IMR-90 (cell line): ENCODE measurements at regions of chr16 and their contacts with region 1.

Region 1: DNA sequence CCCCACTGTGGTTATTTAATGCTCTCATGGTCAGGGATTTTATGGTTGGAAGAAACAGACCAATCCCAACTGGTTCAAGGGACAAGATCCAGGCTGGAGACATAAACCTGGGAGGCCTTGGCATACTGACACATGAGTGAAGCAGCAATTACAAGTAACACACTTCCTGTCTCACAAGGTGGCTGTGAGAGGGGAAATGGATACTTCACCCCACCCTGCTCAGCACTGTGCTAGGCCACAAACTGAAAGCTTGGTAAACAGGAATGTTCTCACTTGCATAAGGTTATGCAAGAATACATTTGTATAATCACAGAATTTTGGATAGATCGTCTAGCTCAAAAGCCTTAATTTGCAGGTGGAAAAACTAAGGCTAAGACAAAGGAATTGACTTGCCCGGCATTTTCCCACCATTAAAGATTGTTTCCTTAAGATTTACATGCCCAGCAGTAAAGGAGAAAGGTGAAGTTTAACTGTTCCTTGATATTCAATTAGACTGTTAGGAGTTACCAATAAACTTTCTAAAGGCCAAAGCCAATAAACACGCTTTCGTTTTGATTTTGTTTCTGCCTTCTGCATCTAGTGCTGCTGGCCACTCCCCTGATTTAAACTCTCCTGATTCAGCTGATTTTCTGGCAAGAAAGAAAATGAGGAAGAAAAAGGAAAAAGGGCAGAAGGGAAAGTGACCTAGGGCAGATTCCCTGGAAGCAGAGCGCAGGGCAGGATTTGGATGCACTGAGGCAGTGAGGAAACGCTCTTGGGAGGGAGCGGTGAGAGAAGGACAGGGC is 215.6 kb upstream of the CDH5 start:
- DNase-seq: peak; percentile 28
- ATAC-seq: no peak
- H3K4me3 ChIP-seq: no peak overlapping the region
- H3K27ac ChIP-seq: peak overlapping the region; percentile 98; the same call in 1 of the 2 replicates
- H3K4me1 ChIP-seq: peaks cover 31% of the 10 kb centered on the region
- H3K27me3 ChIP-seq: no peaks in the 10 kb centered on the region
- CTCF ChIP-seq: no peak
- POLR2A ChIP-seq: no peak
- RAD21 ChIP-seq: no peak

Region 2: GRCh38 chr16:65754820-65755691 is 395.8 kb before region 1 on chr16:
- CTCF ChIA-PET with region 1: no interaction called
- POLR2A ChIA-PET with region 1: no interaction called
- dilution Hi-C with region 1: no loop called
- in situ Hi-C with region 1: no loop called
- intact Hi-C with region 1: loop called (anchors 10 kb)
- DNase-seq: peak; percentile 75
- ATAC-seq: peak; percentile 89
- H3K4me3 ChIP-seq: no peak overlapping the region
- H3K27ac ChIP-seq: peak overlapping the region; percentile 42; the same call in 1 of the 2 replicates
- H3K4me1 ChIP-seq: peaks cover 13% of the 10 kb centered on the region; the same call in 1 of the 2 replicates
- H3K27me3 ChIP-seq: peaks cover 20% of the 10 kb centered on the region
- CTCF ChIP-seq: no peak
- POLR2A ChIP-seq: no peak
- RAD21 ChIP-seq: no peak

Region 3: DNA sequence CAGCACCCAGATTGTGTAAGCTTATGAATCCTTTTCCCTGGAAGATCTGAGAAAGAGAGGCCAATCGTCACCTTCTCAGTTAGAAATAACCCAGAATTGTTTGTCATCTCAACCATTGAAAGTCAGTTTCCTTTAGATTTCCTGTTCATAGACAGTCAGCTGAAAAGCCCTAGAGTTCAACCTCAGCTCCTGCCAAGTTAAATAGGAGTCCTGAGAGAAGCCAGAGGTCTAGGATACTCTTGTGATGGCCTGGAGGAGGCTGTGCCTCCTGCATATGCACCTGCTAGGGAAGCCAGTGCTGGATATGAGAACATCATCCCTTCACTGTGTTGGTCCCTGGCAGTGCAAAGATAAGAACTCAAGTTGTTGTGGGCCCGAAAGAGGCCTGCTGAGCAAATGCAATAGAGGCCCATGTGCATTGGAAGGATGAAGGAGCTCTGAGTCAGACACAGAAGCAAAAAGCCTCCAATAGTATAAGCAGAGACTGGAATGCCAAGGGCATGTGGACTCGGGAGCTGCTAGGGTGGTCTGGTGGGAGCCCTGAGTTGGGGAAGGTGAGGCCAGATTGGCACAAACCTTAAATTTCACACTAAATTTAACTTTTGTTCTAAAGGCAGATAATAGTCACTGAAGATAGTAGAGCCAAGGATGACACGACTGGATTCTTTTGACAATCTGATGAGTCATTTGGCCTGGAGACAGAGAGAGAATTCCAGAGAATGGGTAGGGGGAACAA is 305.3 kb before region 1 on chr16:
- CTCF ChIA-PET with region 1: no interaction called
- POLR2A ChIA-PET with region 1: no interaction called
- dilution Hi-C with region 1: no loop called
- in situ Hi-C with region 1: no loop called
- intact Hi-C with region 1: loop called (anchors 10 kb)
- DNase-seq: peak; percentile 1
- ATAC-seq: peak; percentile 27
- H3K4me3 ChIP-seq: no peak overlapping the region
- H3K27ac ChIP-seq: no peak overlapping the region
- H3K4me1 ChIP-seq: no peaks in the 10 kb centered on the region
- H3K27me3 ChIP-seq: no peaks in the 10 kb centered on the region
- CTCF ChIP-seq: no peak
- POLR2A ChIP-seq: no peak
- RAD21 ChIP-seq: no peak

Region 4: GRCh38 chr16:66026211-66026610 is 124.7 kb before region 1 on chr16:
- CTCF ChIA-PET with region 1: no interaction called
- POLR2A ChIA-PET with region 1: no interaction called
- dilution Hi-C with region 1: no loop called
- in situ Hi-C with region 1: no loop called
- intact Hi-C with region 1: loop called (anchors 5 kb)
- DNase-seq: no peak
- ATAC-seq: no peak
- H3K4me3 ChIP-seq: no peak overlapping the region
- H3K27ac ChIP-seq: no peak overlapping the region
- H3K4me1 ChIP-seq: peaks cover 9% of the 10 kb centered on the region; the same call in 1 of the 2 replicates
- H3K27me3 ChIP-seq: no peaks in the 10 kb centered on the region
- CTCF ChIP-seq: peak; percentile 39
- POLR2A ChIP-seq: no peak
- RAD21 ChIP-seq: peak; percentile 53

Region 5: DNA sequence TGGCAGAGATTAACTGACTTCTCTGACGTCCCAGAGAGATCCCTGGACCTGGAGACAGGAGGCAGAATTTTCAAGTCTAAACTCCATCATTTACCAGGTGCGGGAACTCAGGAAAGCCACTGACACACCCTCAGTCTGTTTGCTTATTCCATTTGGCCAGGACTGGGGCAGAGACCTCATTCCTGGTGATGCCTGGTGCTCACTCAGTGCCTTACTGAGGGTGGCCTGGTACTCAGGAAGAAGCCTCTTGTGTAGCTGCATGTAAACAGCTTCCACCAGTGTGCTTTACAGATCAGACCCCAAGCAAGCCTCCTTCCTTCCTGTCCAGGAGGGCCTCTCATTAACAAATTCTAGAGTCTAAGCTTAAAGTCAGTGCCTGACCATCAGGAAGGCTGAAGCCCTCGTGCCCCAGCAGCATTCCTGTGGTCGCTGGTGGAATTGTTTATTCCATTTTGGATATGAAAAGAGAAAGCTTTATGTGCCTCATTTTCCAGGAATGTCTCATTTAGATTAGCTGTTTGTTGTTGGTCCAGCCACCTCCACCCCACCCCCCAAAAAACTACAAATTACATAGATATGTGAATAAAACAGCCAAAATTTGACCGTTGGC is 20.5 kb before region 1 on chr16:
- CTCF ChIA-PET with region 1: interaction called, 3 read pairs
- POLR2A ChIA-PET with region 1: interaction called, 5 read pairs
- dilution Hi-C with region 1: no loop called
- in situ Hi-C with region 1: no loop called
- intact Hi-C with region 1: loop called (anchors 2 kb)
- DNase-seq: peak; percentile 92
- ATAC-seq: peak; percentile 87
- H3K4me3 ChIP-seq: no peak overlapping the region
- H3K27ac ChIP-seq: peak overlapping the region; percentile 99
- H3K4me1 ChIP-seq: peaks cover 57% of the 10 kb centered on the region
- H3K27me3 ChIP-seq: no peaks in the 10 kb centered on the region
- CTCF ChIP-seq: no peak
- POLR2A ChIP-seq: no peak
- RAD21 ChIP-seq: no peak; the same call in 1 of the 2 replicates

Region 6: DNA sequence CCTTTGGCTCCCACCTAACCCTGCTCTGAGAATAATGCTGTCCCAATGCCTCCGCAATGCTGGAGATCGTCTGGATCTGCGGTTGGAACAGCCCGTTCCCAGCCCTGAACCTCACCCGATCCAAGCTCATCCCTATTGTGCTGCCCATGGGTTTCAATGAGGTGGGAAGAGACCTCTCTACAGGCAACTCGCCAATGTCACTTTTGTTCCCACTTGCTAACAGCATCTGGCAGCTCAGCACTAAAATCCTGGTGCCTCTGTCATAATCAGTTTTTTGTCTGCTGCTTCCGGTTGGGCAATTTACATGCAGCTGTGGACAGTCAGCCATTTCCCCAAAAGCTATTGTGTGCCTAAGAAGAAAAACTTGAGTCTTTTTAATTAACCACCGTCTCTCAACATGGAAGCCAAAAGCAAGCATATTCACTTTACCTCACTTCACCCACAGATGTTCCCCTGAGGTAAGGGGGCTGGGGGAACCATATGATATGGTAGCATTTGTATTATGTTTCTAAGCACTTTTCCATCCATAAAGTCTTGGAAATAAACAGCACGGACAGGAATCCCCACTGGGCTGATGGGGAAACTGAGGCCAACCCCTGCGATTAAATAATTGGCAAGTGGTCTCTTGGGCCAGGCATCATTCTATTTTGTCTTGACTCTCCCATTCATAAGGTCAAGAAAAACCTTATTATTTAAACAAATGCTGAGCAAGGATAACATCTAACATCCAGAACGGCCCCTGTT is 56.4 kb after region 1 on chr16:
- CTCF ChIA-PET with region 1: no interaction called
- POLR2A ChIA-PET with region 1: no interaction called
- dilution Hi-C with region 1: no loop called
- in situ Hi-C with region 1: no loop called
- intact Hi-C with region 1: no loop called
- DNase-seq: no peak
- ATAC-seq: no peak
- H3K4me3 ChIP-seq: no peak overlapping the region
- H3K27ac ChIP-seq: no peak overlapping the region
- H3K4me1 ChIP-seq: peaks cover 4% of the 10 kb centered on the region
- H3K27me3 ChIP-seq: peaks cover 2% of the 10 kb centered on the region; the same call in 1 of the 2 replicates
- CTCF ChIP-seq: no peak
- POLR2A ChIP-seq: no peak
- RAD21 ChIP-seq: no peak